AG04450 (cell line): ENCODE measurements at regions of chr3 and their contacts with region 1.

Region 1: DNA sequence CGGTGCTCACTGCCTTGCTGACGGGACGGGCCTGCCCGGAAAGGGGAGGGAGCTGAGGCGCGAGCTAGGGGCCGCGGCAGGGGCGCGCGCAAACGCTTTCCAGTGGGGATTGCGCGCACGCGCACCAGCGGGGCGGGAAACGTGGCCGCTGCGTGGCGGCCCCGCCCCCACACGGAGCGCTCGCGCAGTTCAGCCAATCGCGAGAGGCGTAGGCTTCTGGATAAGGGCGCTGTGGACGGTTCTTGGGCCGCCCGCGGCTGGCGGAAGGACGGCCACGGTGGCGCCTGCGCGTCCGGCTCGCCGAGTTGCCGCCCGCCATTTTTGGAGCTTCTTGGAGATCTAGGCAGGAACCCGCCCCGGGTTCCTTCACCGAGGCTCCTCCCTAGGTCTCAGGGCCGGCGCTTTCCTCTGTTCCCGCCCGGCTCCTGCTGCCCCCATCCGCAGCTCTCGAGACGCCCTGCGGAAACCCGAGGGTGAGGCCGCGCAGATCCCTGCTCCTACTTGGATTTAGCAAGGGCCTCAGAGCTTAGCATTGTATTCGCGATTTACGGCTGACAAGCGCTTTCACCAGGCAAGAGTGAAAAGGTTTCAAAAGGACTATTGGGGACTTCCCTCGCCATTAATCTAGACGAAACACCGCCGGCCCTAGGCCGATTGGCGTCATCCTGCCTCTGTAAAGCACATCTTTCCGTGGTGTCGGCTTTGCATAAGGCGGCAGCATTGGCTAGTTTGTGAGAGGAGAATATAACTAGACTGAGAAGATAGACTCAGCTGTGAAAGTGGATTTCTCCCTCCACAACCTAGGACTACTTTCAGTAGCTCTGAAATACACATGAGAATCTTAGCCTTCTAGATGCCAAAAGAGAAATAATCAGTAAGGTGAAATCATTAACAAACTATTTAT is 496 bp upstream of the STAG1 start:
- DNase-seq: peak; percentile 96
- H3K4me3 ChIP-seq: peak overlapping the region; percentile 71
- H3K27ac ChIP-seq: peak overlapping the region; percentile 99
- H3K27me3 ChIP-seq: no peaks in the 10 kb centered on the region
- CTCF ChIP-seq: peak; percentile 42

Region 2: DNA sequence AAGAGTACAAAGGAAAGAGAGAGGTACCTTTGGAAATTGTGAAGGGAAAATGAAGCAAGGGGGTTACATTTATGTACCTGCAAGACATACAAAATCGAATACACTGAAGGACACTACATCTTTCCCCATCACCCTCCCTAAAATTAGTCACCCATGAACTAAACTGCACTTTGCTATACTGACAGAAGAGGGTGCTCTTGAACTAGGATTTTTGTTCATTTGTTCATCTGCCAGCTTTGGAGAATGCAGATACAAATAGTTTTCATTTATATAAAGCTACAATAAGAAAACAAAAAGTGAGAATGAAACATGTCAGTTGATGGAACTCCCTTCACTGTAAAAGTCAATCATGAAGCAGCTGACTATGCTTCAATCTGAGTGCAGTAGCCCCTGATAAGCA is 446.8 kb before region 1 on chr3:
- CTCF ChIA-PET with region 1: interaction called, 99 read pairs
- POLR2A ChIA-PET with region 1: interaction called, 17 read pairs
- DNase-seq: peak; percentile 43
- H3K4me3 ChIP-seq: no peak overlapping the region
- H3K27ac ChIP-seq: no peak overlapping the region
- H3K27me3 ChIP-seq: no peaks in the 10 kb centered on the region
- CTCF ChIP-seq: peak; percentile 72

Region 3: GRCh38 chr3:136350132-136350531 is 402.5 kb before region 1 on chr3:
- CTCF ChIA-PET with region 1: interaction called, 17 read pairs
- POLR2A ChIA-PET with region 1: interaction called, 19 read pairs
- DNase-seq: peak; percentile 92
- H3K4me3 ChIP-seq: peak overlapping the region; percentile 42
- H3K27ac ChIP-seq: peak overlapping the region; percentile 100
- H3K27me3 ChIP-seq: no peaks in the 10 kb centered on the region
- CTCF ChIP-seq: no peak

Region 4: DNA sequence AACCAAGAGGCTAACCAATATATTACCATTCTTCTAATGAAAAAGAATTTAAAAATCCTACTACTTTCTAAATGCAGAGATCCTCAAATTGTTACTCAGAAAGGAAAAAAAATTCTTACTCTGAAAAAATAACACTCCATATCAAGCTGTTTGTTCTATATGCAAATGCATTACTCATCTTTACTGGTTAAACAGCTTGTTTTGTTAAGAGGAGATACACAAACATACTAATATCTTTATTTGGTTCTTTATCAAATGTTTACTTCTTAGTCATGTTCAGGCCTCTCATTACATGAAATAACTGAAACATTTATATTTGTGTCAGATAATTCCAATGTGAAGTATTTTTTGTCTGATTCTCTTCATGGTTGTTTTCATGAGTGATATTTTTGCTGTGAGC is 355.8 kb before region 1 on chr3:
- CTCF ChIA-PET with region 1: interaction called, 88 read pairs
- POLR2A ChIA-PET with region 1: interaction called, 24 read pairs
- DNase-seq: peak; percentile 3
- H3K4me3 ChIP-seq: no peak overlapping the region
- H3K27ac ChIP-seq: no peak overlapping the region
- H3K27me3 ChIP-seq: no peaks in the 10 kb centered on the region
- CTCF ChIP-seq: no peak

Region 5: DNA sequence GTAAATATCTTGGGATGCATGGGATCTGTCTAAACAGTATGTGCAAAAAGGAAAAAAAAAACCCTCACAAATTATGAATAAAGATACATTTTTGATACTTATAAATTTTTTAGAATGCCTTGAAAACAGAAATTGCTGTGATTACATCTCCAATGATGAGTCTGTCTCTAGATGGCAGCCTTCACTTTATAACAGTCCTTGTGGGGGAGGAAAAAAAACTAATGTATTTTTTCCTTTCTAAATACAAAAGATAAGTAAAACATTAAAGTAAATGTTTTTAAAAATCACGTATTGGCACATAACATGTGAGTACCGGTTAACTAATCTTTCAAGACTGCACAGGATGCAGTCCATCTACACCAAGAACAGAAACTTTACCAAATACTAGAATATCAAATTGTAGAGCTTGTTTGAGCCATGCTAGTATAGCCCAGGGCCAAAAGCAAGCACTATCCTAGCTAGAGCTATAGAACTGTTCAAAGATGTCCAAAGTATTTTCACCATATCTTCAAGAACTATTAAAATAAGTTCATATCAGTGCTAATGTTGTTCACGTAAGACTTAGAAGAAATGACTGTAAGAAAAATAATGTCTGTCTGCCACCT is 206.9 kb before region 1 on chr3:
- CTCF ChIA-PET with region 1: interaction called, 46 read pairs
- POLR2A ChIA-PET with region 1: interaction called, 3 read pairs
- DNase-seq: no peak
- H3K4me3 ChIP-seq: no peak overlapping the region
- H3K27ac ChIP-seq: no peak overlapping the region
- H3K27me3 ChIP-seq: no peaks in the 10 kb centered on the region
- CTCF ChIP-seq: peak; percentile 33

Region 6: GRCh38 chr3:136602818-136603217 is 149.9 kb before region 1 on chr3:
- CTCF ChIA-PET with region 1: no interaction called
- POLR2A ChIA-PET with region 1: no interaction called
- DNase-seq: no peak
- H3K4me3 ChIP-seq: no peak overlapping the region
- H3K27ac ChIP-seq: no peak overlapping the region
- H3K27me3 ChIP-seq: no peaks in the 10 kb centered on the region
- CTCF ChIP-seq: no peak

Region 7: DNA sequence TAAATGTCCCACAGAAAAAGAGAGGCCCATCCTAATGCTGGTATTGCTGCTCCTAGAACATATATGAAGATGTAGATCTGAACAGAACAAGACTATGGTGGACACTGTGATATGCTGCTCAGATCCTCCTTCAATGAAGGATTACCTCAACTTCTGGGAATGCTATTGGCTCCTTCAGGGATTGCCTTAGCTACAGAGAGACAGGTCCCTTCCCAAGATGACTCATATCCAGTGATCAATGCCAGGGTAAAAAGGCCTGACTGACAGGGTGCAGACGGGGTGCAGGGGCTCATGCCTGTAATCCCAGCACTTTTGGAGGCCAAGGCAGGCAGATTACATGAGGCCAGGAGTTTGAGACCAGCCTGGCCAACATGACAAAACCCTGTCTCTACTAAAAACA is 20.0 kb after region 1 on chr3:
- CTCF ChIA-PET with region 1: interaction called, 4 read pairs
- POLR2A ChIA-PET with region 1: interaction called, 12 read pairs
- DNase-seq: no peak
- H3K4me3 ChIP-seq: no peak overlapping the region
- H3K27ac ChIP-seq: peak overlapping the region; percentile 11
- H3K27me3 ChIP-seq: no peaks in the 10 kb centered on the region
- CTCF ChIP-seq: no peak

Region 8: GRCh38 chr3:137032465-137033120 is 279.9 kb after region 1 on chr3:
- CTCF ChIA-PET with region 1: interaction called, 16 read pairs
- POLR2A ChIA-PET with region 1: interaction called, 3 read pairs
- DNase-seq: peak; percentile 32
- H3K4me3 ChIP-seq: peak overlapping the region; percentile 58
- H3K27ac ChIP-seq: no peak overlapping the region
- H3K27me3 ChIP-seq: peaks cover 8% of the 10 kb centered on the region
- CTCF ChIP-seq: peak; percentile 95